ENCODE measurements at regions of chr14 and their contacts with region 1.

Region 1: DNA sequence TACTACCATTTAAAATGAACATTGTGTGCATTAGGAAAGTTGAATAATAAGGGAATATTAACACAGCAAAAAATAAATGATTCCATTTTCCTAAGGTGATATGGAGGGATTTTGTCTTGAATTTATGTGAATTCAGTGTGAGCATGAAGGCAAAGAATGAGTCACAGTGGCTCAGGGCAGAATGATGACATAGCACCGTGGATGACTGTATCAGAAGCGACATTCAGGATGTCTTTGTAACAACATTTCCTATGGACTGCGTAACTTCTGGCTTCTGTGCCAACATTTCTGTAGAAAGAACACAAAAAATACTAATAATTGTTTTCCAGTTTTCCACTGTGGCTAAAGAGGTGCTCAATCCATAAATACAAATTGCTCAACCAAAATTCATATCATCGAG is 54.6 kb downstream of the TTC8 start:
- DNase-seq: no peak
- ATAC-seq: no peak

Region 2: GRCh38 chr14:88667555-88668273 is 211.3 kb before region 1 on chr14:
- intact Hi-C with region 1: loop called in 1 of 2 experiments (anchors 10 kb)
- DNase-seq: peak; percentile 33 to 35
- ATAC-seq: peak; percentile 92

Region 3: GRCh38 chr14:88967294-88967693 is 88.3 kb after region 1 on chr14:
- intact Hi-C with region 1: no loop called
- DNase-seq: no peak
- ATAC-seq: no peak

Region 4: DNA sequence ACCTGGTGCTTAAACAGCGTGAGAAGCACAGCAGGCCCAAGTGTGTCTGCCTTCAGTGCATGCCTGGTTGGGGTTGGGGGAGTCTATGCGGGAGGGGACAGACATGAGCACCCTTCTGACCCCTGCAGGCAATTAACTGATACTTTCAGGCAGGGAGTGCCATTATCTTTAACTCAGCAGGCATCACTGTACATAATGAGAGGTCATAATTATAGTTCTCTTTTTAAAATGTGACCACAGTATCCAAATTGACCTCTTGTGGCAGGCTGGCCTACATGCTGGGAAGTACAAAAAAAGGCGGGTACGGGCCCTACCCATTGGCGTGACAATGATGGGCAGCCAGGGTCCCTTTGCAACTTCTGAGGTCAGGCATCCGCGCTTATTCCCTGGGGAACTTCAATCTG is 328.9 kb after region 1 on chr14:
- intact Hi-C with region 1: no loop called
- DNase-seq: no peak
- ATAC-seq: no peak

Measured in left colon (tissue), 2 donors.